Activated B cell treated with CpG ODN at 0.5 μM for 24 hours (primary cell): ENCODE measurements at regions of chr1 and their contacts with region 1.

Region 1: GRCh38 chr1:13813398-13814012 is 113.5 kb downstream of the PRDM2 start:
- DNase-seq: peak; percentile 41
- ATAC-seq: peak; percentile 56
- H3K4me3 Mint-ChIP-seq: no peak overlapping the region
- H3K27ac Mint-ChIP-seq: no peak overlapping the region
- H3K4me1 Mint-ChIP-seq: peaks cover 31% of the 10 kb centered on the region
- H3K27me3 Mint-ChIP-seq: no peaks in the 10 kb centered on the region
- CTCF ChIP-seq: no peak

Region 2: DNA sequence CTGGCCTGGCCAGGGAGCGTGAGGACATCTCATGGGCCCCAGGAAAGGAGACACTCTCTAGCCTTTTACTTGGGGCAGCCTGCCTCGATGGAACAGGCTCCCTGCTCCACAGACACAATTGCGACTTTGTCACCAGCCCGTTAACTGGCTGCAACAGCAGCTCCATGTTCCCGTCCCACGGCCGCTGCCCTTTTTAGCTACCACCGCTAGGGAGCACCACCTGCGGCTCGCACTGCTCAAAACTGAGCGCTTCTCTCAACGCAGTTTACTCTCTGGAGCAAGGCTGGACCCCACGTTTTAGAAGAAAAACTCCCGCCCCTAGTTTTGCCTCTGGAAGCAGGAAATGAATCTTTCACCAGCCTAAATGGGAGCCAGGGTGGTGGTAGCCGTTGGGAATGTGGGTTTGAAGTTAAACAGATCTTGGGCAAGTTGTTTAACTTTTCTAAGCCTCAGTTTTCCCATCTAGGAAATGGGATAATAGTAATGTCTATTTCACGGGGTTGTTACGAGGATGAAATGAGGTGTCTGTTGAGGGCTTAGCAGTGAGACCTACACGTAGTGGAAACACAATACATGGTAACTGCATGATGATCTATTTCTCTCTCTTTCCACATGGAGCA is 296.2 kb before region 1 on chr1:
- CTCF ChIA-PET with region 1: no interaction called
- POLR2A ChIA-PET with region 1: no interaction called
- intact Hi-C with region 1: loop called (anchors 5 kb)
- DNase-seq: no peak
- ATAC-seq: no peak
- H3K4me3 Mint-ChIP-seq: no peak overlapping the region
- H3K27ac Mint-ChIP-seq: no peak overlapping the region
- H3K4me1 Mint-ChIP-seq: peaks cover 2% of the 10 kb centered on the region
- H3K27me3 Mint-ChIP-seq: peaks cover 41% of the 10 kb centered on the region
- CTCF ChIP-seq: no peak